H1 (cell line): ENCODE measurements at regions of chr5 and their contacts with region 1.

Region 1: DNA sequence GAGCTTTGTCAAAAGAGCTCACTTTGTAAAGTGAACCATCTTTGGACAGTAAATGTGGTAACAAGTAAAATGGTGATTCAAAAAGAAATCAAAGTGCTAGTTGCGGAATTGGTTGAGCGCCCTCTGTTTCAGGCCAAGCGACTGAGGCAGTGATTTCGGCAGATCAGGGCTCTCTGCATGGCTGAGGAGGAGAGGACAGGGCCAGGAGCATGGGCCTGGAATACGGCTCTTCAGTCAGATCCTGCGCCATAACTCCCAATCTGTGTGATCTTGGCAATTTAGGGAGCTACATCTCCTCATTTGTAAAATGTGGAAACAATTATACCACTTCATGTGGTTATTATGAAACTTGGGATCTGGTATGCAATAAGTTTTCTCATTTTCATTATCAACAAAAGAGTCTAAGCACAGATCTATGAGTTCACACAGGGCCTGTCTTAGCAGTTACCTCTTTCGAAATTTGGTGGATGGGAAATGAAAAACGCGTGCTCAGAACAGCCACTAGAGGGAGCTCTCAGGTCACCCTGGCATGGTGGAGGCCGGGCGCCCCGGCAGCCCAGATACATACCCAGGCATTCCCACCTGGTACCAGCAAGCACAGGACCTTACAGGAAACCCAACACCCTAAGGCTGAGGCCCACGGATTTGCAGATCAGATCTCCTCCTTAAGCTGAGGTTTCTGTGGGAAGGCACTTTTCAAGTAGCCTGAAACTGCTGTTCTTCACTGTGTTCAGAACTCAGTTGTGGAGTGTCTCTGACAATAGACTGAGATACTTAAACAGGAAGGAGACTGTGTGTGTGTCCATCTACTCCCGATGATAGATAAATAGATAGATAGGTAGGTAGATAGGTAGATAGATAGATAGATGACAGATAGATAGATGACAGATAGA is 303.7 kb downstream of the RAB3C start:
- DNase-seq: peak; percentile 57 to 77
- H3K4me3 ChIP-seq: no peak overlapping the region
- H3K27ac ChIP-seq: no peak overlapping the region
- H3K4me1 ChIP-seq: no peaks in the 10 kb centered on the region; a peak in 1 of 7 replicates
- H3K27me3 ChIP-seq: no peaks in the 10 kb centered on the region
- CTCF ChIP-seq: peak; percentile 72 to 89 (median 85)
- EP300 ChIP-seq: no peak
- POLR2A ChIP-seq: no peak
- RAD21 ChIP-seq: peak; percentile 93

Region 2: DNA sequence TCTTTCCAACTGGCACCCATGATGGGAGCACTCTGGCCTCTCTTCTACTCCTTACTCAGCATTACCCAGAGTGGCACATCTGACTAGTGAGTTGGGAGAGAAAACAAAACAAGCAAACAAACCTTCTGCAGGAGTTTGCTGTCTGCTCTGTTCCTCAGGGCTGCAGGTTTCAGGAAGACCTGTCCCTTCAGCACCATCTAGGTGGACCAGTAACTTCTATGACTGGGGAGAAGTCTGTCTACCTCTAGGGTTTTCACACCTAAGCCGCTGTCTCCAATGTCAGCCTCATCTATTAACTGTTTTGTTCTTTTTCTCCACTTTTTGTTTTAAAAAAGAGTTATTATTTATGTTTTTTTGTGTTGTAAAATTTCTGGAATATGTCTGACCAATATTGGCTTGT is 245.0 kb before region 1 on chr5:
- CTCF ChIA-PET with region 1: no interaction called
- POLR2A ChIA-PET with region 1: no interaction called
- DNase-seq: no peak
- H3K4me3 ChIP-seq: no peak overlapping the region
- H3K27ac ChIP-seq: no peak overlapping the region
- H3K4me1 ChIP-seq: no peaks in the 10 kb centered on the region
- H3K27me3 ChIP-seq: no peaks in the 10 kb centered on the region
- CTCF ChIP-seq: no peak
- EP300 ChIP-seq: no peak
- POLR2A ChIP-seq: no peak
- RAD21 ChIP-seq: no peak

Region 3: GRCh38 chr5:58871648-58872242 is 14.8 kb before region 1 on chr5:
- CTCF ChIA-PET with region 1: interaction called, 19 read pairs
- POLR2A ChIA-PET with region 1: interaction called, 3 read pairs
- DNase-seq: no peak
- H3K4me3 ChIP-seq: no peak overlapping the region
- H3K27ac ChIP-seq: no peak overlapping the region
- H3K4me1 ChIP-seq: no peaks in the 10 kb centered on the region
- H3K27me3 ChIP-seq: no peaks in the 10 kb centered on the region
- CTCF ChIP-seq: peak in 2 of 3 experiments; percentile 33 to 38; a peak in 2 of 4 replicates
- EP300 ChIP-seq: no peak
- POLR2A ChIP-seq: no peak
- RAD21 ChIP-seq: peak; percentile 37 to 40

Region 4: GRCh38 chr5:58898538-58898937 is 12.0 kb after region 1 on chr5:
- CTCF ChIA-PET with region 1: interaction called, 38 read pairs
- POLR2A ChIA-PET with region 1: no interaction called
- DNase-seq: no peak
- H3K4me3 ChIP-seq: no peak overlapping the region
- H3K27ac ChIP-seq: no peak overlapping the region
- H3K4me1 ChIP-seq: no peaks in the 10 kb centered on the region
- H3K27me3 ChIP-seq: no peaks in the 10 kb centered on the region
- CTCF ChIP-seq: no peak
- EP300 ChIP-seq: no peak
- POLR2A ChIP-seq: no peak
- RAD21 ChIP-seq: no peak

Region 5: DNA sequence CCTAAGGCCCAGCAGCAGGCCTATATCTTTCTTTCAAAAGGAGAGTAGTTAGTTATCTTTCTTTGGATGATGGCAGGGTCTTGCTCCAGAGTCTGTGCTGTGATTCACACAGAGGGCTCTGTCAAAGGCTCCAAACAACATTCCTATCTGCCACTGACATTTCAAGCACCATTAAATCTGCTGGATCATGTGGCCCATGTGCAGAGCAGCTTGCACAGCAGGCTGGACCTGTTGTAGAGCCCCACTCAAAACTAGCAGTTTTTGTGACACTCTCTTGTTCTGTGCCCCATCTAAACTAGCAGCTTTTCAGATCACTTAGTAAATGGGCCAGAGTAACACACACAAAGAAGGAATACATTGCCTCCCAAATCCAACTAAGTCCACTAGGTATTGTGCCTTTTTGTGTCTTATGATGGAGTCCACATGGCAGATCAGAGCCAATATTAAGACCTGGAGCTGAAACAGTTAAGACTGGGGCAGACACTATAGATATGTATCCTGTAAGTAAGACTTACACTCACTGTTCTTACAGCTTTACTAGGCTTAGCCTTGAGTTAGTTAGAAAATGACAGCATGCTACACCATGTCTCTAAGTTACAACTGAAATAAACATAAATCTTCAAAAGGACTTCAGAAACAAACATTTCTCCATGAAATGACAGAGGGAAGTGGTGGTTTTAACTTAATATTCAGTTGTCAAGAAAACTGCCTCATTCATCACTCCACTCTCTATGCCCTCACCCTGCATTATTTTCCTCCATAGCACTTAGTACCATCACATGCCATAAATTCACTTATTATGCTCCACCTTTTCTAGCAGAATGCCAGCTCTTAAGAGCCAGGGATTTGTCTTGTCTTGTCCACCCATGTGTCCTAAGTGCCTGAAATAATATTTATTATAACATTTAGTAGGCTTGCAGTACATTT is 97.2 kb after region 1 on chr5:
- CTCF ChIA-PET with region 1: interaction called, 11 read pairs
- POLR2A ChIA-PET with region 1: no interaction called
- DNase-seq: no peak
- H3K4me3 ChIP-seq: no peak overlapping the region
- H3K27ac ChIP-seq: no peak overlapping the region
- H3K4me1 ChIP-seq: no peaks in the 10 kb centered on the region
- H3K27me3 ChIP-seq: no peaks in the 10 kb centered on the region
- CTCF ChIP-seq: no peak
- EP300 ChIP-seq: no peak
- POLR2A ChIP-seq: no peak
- RAD21 ChIP-seq: no peak

Region 6: DNA sequence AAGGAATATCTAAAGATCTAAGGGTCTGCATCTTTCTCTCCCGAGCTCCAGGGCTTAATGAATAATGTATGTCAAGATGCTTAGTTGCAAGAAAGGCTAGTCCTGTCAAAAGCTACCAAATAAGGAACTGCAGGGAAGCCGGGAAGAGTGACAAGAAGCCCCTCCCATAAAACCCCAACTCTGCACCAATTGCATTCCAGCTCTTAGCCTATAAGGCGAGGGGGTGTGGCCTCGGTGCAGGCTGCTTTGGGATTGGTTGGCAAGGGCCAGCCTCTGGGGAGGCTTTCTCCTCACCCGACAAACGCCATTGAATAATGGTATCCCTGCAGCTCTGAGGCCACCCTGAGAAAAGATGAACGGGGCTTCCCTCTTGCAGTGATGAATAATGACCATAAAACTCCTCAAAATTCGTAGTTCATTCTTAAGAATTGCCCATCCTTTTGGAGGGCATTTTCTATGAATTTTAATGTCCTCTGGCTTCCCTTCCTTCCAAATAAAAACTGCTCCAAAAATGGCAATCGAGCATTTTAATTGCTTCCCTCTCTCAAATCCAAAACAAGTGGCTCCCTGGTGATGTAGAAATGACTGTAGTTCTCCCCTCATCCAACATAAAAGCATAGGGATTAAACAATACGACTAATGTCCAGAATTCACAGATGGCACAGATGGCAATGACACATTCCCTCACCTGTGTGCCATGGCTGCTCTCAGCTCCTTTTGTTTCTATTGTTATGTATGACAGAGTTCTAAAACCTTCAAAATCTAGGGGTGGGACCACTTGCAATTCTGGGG is 113.4 kb after region 1 on chr5:
- CTCF ChIA-PET with region 1: interaction called, 206 read pairs
- POLR2A ChIA-PET with region 1: interaction called, 4 read pairs
- DNase-seq: peak in 1 of 2 experiments; percentile 61
- H3K4me3 ChIP-seq: no peak overlapping the region
- H3K27ac ChIP-seq: no peak overlapping the region
- H3K4me1 ChIP-seq: peaks cover 2 to 14% (median 10%) of the 10 kb centered on the region in 4 experiments; a peak in 6 of 7 replicates
- H3K27me3 ChIP-seq: no peaks in the 10 kb centered on the region
- CTCF ChIP-seq: no peak
- EP300 ChIP-seq: no peak
- POLR2A ChIP-seq: 0 out of 3 replicates have a peak, but pooled peaks of 1 of the 2 experiments have one; percentile 28
- RAD21 ChIP-seq: no peak

Region 7: DNA sequence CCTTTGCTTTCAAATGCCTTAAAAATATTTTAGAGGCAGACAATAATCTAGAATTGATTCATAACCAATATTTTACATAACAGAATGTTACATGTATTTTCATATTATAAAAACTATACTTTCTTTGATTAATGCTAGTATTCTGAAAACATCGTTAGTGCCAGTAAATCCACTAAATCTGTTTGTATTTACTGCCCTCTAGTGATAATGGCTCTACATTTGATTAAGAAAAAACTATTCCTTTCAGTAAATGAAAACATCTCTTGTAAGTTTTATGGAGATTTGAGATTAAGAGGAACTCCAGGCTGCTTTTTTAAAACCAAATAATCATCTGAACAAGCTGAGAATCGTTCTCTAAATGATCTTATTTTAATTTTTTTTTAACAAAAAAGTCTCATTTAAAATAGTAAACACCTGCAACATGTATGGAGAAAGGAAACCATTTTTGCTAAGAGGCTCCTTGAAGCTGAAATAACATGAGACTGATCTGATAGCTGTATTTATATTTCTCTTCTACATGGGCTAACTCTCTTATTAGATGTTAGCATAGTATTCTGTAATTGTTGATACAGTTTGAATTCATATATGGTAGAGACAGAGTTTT is 121.0 kb after region 1 on chr5:
- CTCF ChIA-PET with region 1: interaction called, 206 read pairs
- POLR2A ChIA-PET with region 1: no interaction called
- DNase-seq: no peak
- H3K4me3 ChIP-seq: no peak overlapping the region
- H3K27ac ChIP-seq: no peak overlapping the region
- H3K4me1 ChIP-seq: peaks cover 2 to 10% (median 8%) of the 10 kb centered on the region in 4 experiments; a peak in 4 of 7 replicates
- H3K27me3 ChIP-seq: no peaks in the 10 kb centered on the region
- CTCF ChIP-seq: peak in 2 of 3 experiments; percentile 30 to 38; a peak in 2 of 4 replicates
- EP300 ChIP-seq: no peak
- POLR2A ChIP-seq: no peak
- RAD21 ChIP-seq: peak in 1 of 2 experiments; percentile 71

Region 8: DNA sequence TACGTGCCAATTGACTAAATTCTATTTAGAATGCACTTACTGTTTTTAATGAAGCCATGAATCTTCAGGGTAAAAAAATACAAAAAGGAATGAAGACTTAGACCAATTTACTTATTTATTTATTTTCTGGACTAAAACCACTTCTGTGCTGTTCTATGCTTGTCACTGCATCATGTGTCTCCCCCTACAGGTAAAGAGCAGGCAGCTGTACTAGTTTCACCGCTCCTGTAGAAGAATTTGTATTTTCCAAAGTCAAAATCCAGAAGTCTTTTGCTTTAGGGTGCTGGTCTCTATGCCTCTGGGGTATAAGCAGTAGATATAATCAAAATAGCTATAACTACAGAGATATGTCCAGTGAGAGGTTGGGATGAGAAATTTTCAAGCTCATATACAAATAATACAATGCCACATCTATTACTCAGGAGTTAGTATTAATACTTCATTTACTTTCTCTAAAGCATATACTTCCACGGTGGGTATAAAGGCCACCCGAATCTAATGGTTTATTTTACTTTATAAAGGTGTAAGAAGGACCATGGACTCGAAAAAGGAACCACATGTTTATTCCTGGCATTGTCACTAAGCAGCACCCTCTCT is 287.8 kb after region 1 on chr5:
- CTCF ChIA-PET with region 1: interaction called, 39 read pairs
- POLR2A ChIA-PET with region 1: no interaction called
- DNase-seq: no peak
- H3K4me3 ChIP-seq: no peak overlapping the region
- H3K27ac ChIP-seq: no peak overlapping the region
- H3K4me1 ChIP-seq: no peaks in the 10 kb centered on the region
- H3K27me3 ChIP-seq: no peaks in the 10 kb centered on the region
- CTCF ChIP-seq: peak in 2 of 3 experiments; percentile 75 to 76; a peak in 3 of 4 replicates
- EP300 ChIP-seq: no peak
- POLR2A ChIP-seq: no peak
- RAD21 ChIP-seq: peak; percentile 76 to 82